CD8-positive, alpha-beta T cell (primary cell): ENCODE measurements at regions of chr3 and their contacts with region 1.

Region 1: DNA sequence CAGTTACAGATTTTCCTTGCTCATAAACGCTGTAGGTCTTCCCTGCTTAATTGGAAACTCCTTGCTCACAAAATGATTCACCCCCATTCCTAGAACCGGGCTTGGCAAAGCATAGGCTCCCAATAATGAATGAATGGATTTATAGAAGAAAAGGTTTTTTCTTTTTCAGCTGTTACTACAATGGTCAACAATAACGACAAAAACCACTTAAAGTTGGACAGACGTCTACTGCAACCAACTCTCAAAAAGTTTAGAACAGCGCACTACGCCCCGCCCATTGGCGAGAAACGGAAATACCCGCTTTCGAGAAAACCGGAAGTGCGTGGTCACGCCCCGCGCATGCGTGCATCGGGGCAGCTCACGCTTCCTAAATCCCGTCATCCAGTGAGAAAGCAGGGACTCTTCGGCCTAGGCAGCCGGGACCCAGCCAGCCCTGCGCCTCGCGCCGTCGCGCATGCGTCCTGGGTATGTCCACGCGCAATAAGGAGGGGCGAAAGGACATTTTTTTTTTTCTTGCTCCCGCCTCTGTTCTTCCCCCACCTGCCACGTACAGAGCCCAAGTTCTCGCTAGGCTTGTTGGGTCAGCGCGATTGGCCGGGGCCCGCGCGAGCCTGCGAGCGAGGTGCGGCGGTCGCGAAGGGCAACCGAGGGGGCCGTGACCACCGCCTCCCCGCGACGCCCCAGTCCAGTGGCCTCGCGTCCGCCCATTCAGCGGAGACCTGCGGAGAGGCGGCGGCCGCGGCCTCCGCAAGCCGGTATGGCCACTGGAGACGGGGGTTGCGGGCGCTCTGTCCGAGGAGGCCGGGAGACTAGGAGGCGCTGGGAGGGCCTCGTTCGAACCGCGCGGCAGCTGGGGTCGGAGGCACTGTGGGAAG is at the start of gene TFG:
- DNase-seq: peak; percentile 93 to 100 (median 97)
- ATAC-seq: peak; percentile 89
- H3K4me3 ChIP-seq: peak within 1 kb of the TSS; percentile 59 to 94
- H3K4me3 Mint-ChIP-seq: peak within 1 kb of the TSS; percentile 91
- H3K27ac ChIP-seq: peak within 1 kb of the TSS; percentile 87 to 90
- H3K27ac Mint-ChIP-seq: peak within 1 kb of the TSS; percentile 96
- H3K4me1 ChIP-seq: peaks cover 22% of the 10 kb centered on the region
- H3K4me1 Mint-ChIP-seq: peaks cover 47% of the 10 kb centered on the region
- H3K27me3 ChIP-seq: no peaks in the 10 kb centered on the region
- H3K27me3 Mint-ChIP-seq: no peaks in the 10 kb centered on the region
- CTCF ChIP-seq: no peak
- total RNA-seq, gene TFG: 76.3 to 88.3 TPM

Region 2: DNA sequence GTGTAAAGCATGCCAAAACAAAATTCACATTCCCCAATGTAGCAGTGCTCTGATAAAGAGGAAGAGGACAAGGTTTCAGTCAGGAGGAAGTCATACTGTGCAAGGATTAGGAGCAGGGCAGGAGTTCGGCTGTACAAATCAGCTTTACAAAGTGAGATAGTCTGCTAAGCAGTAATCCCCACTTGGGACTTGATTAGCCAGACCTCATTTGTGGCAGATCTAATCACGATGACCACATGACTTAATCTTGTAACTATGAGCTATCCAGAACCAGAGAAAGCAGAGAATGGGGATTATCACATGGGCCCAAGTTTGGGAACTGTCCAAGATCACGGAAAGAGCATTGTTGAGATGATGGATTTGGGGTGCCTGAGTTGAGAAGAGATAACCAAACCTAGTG is 1815.5 kb before region 1 on chr3:
- CTCF ChIA-PET with region 1: no interaction called
- POLR2A ChIA-PET with region 1: no interaction called
- intact Hi-C with region 1: loop called in 1 of 2 experiments (anchors 10 kb)
- DNase-seq: no peak
- ATAC-seq: no peak
- H3K4me3 ChIP-seq: no peak overlapping the region
- H3K4me3 Mint-ChIP-seq: no peak overlapping the region
- H3K27ac ChIP-seq: no peak overlapping the region
- H3K27ac Mint-ChIP-seq: no peak overlapping the region
- H3K4me1 ChIP-seq: no peaks in the 10 kb centered on the region
- H3K4me1 Mint-ChIP-seq: no peaks in the 10 kb centered on the region
- H3K27me3 ChIP-seq: no peaks in the 10 kb centered on the region
- H3K27me3 Mint-ChIP-seq: no peaks in the 10 kb centered on the region
- CTCF ChIP-seq: no peak

Region 3: GRCh38 chr3:99875929-99876841 is 833.0 kb before region 1 on chr3:
- CTCF ChIA-PET with region 1: no interaction called
- POLR2A ChIA-PET with region 1: no interaction called
- intact Hi-C with region 1: loop called (anchors 5 kb)
- DNase-seq: peak; percentile 40 to 81 (median 66)
- ATAC-seq: peak; percentile 92
- H3K4me3 ChIP-seq: peak overlapping the region; percentile 60 to 65
- H3K4me3 Mint-ChIP-seq: peak overlapping the region; percentile 84
- H3K27ac ChIP-seq: peak overlapping the region in 1 of 2 experiments; percentile 32
- H3K27ac Mint-ChIP-seq: peak overlapping the region; percentile 64
- H3K4me1 ChIP-seq: peaks cover 13% of the 10 kb centered on the region
- H3K4me1 Mint-ChIP-seq: peaks cover 17% of the 10 kb centered on the region
- H3K27me3 ChIP-seq: no peaks in the 10 kb centered on the region
- H3K27me3 Mint-ChIP-seq: peaks cover 3% of the 10 kb centered on the region
- CTCF ChIP-seq: no peak

Region 4: GRCh38 chr3:100334488-100335351 is 374.5 kb before region 1 on chr3 and contains the start of gene NIT2:
- CTCF ChIA-PET with region 1: no interaction called
- POLR2A ChIA-PET with region 1: no interaction called
- intact Hi-C with region 1: loop called (anchors 1 to 5 kb)
- DNase-seq: peak; percentile 54 to 89 (median 78)
- ATAC-seq: peak; percentile 95
- H3K4me3 ChIP-seq: peak within 1 kb of the TSS; percentile 70 to 72
- H3K4me3 Mint-ChIP-seq: peak within 1 kb of the TSS; percentile 99
- H3K27ac ChIP-seq: peak within 1 kb of the TSS; percentile 51 to 71
- H3K27ac Mint-ChIP-seq: peak within 1 kb of the TSS; percentile 93
- H3K4me1 ChIP-seq: peaks cover 9% of the 10 kb centered on the region
- H3K4me1 Mint-ChIP-seq: peaks cover 28% of the 10 kb centered on the region
- H3K27me3 ChIP-seq: no peaks in the 10 kb centered on the region
- H3K27me3 Mint-ChIP-seq: no peaks in the 10 kb centered on the region
- CTCF ChIP-seq: no peak
- total RNA-seq, gene NIT2: 17.2 to 17.7 TPM

Region 5: DNA sequence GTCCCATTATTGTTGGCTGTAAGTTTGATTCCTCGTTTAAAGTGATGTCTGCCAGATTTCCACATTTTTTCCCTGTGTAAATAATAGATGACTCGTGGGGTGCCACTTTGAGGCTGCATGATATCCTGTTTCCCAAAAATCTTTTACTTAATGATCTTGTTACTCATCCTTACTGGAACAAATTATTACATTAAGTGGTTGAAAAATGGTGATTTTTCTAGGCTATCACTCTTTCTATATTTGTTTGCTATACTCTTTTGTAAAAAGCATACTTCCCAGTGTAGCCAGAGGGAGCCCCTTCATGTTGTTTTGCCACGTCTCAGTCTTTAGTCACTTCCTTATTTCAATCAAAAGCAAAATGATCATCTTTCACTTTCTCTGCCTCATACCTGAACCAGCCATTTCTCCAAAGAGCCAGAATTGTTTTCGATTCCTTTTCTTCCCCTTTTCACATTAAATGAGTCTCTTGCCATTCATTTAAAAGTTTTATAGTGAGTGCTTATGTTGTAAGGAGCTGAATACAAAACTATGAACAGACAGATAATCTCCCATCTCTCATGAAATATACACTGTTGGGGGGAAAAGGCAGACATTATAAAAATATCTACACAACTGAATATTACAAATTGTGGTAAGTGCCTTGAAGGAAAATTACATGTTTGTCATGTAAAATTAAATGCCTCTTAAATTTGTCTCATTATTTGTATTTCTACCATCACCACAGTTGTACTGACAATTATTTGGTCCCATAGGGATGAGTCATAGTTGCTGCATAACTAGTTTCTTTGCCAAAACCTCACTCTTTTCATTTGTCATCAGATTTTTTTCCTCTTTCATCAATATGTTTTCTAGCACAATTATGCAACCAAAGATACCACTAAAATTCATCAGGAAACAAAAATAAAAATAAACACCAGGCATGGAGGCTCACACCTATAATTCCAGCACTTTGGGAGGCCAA is 58.3 kb before region 1 on chr3:
- CTCF ChIA-PET with region 1: interaction called, 3 read pairs
- POLR2A ChIA-PET with region 1: no interaction called
- intact Hi-C with region 1: loop called (anchors 1 to 5 kb)
- DNase-seq: peak in 2 of 9 experiments; percentile 12 to 36
- ATAC-seq: peak; percentile 86
- H3K4me3 ChIP-seq: no peak overlapping the region
- H3K4me3 Mint-ChIP-seq: peak overlapping the region; percentile 16
- H3K27ac ChIP-seq: no peak overlapping the region
- H3K27ac Mint-ChIP-seq: peak overlapping the region; percentile 60
- H3K4me1 ChIP-seq: no peaks in the 10 kb centered on the region
- H3K4me1 Mint-ChIP-seq: peaks cover 9% of the 10 kb centered on the region
- H3K27me3 ChIP-seq: no peaks in the 10 kb centered on the region
- H3K27me3 Mint-ChIP-seq: no peaks in the 10 kb centered on the region
- CTCF ChIP-seq: no peak

Region 6: GRCh38 chr3:101676765-101677435 is 967.7 kb after region 1 on chr3 and contains the start of gene ZBTB11:
- CTCF ChIA-PET with region 1: no interaction called
- POLR2A ChIA-PET with region 1: interaction called, 3 read pairs
- intact Hi-C with region 1: loop called (anchors 1 to 5 kb)
- DNase-seq: peak; percentile 99 to 100 (median 100)
- ATAC-seq: peak; percentile 63
- H3K4me3 ChIP-seq: peak within 1 kb of the TSS; percentile 90 to 100
- H3K4me3 Mint-ChIP-seq: peak within 1 kb of the TSS; percentile 95
- H3K27ac ChIP-seq: peak within 1 kb of the TSS; percentile 97 to 99
- H3K27ac Mint-ChIP-seq: peak within 1 kb of the TSS; percentile 98
- H3K4me1 ChIP-seq: peaks cover 26% of the 10 kb centered on the region
- H3K4me1 Mint-ChIP-seq: peaks cover 49% of the 10 kb centered on the region
- H3K27me3 ChIP-seq: no peaks in the 10 kb centered on the region
- H3K27me3 Mint-ChIP-seq: no peaks in the 10 kb centered on the region
- CTCF ChIP-seq: no peak
- total RNA-seq, gene ZBTB11: 69.6 to 75.2 TPM

Region 7: DNA sequence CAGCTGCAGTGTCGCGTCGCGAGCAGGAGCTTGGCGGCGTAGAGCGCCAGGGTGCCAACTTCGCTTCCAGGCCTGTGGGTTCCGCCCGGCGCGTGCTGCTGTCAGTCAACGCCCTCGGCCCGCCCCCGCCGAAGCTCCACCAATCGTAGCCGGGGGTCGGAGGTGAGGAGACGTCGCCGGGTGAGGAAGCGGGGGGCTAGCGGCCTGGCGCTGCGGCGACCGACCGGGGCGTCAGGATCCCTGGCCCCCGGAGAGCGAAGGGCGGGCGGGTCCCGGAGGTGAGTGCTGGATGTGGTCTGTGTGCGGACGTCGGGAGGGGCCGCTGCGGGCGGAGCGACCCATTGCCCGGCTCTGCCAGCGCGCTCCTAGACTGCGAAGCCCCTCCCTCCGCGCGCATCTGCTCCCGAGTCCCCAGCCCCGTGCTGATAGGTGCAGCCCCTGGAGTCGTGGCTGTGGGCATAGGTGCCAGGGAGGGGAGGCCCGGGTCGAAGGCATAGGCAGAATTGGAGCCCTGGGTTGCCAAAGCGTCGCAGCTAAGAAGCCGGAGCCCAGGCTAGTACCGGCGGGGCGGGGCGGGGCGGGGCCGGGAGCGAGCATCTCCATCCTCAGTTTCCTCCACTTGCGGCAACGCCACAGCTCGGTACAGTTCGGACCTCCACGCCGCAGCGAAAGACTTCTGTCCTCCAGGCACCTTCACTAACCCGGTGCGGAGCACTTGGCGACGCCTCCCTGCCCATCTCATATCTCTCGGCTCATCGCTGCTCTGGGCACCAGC is 1070.0 kb after region 1 on chr3 and contains the start of gene NXPE3:
- CTCF ChIA-PET with region 1: no interaction called
- POLR2A ChIA-PET with region 1: no interaction called
- intact Hi-C with region 1: loop called in 1 of 2 experiments (anchors 5 kb)
- DNase-seq: peak; percentile 86 to 96 (median 94)
- ATAC-seq: peak; percentile 88
- H3K4me3 ChIP-seq: peak within 1 kb of the TSS; percentile 48 to 92
- H3K4me3 Mint-ChIP-seq: peak within 1 kb of the TSS; percentile 89
- H3K27ac ChIP-seq: peak within 1 kb of the TSS; percentile 77 to 88
- H3K27ac Mint-ChIP-seq: peak within 1 kb of the TSS; percentile 99
- H3K4me1 ChIP-seq: peaks cover 42% of the 10 kb centered on the region
- H3K4me1 Mint-ChIP-seq: peaks cover 57% of the 10 kb centered on the region
- H3K27me3 ChIP-seq: no peaks in the 10 kb centered on the region
- H3K27me3 Mint-ChIP-seq: no peaks in the 10 kb centered on the region
- CTCF ChIP-seq: no peak
- total RNA-seq, gene NXPE3: 39.8 to 40.3 TPM